ENCODE measurements at regions of chr10 and their contacts with region 1.

Region 1: GRCh38 chr10:125982260-125982948 is 86.0 kb downstream of the FANK1 start:
- DNase-seq: peak in 3 of 6 donors; percentile 24 to 51 (median 41)
- ATAC-seq: peak; percentile 53 to 93 (median 87)
- H3K4me3 ChIP-seq: no peak overlapping the region
- H3K27ac ChIP-seq: no peak overlapping the region
- H3K4me1 ChIP-seq: no peaks in the 10 kb centered on the region
- H3K27me3 ChIP-seq: no peaks in the 10 kb centered on the region
- CTCF ChIP-seq: peak; percentile 26 to 63 (median 35)

Region 2: DNA sequence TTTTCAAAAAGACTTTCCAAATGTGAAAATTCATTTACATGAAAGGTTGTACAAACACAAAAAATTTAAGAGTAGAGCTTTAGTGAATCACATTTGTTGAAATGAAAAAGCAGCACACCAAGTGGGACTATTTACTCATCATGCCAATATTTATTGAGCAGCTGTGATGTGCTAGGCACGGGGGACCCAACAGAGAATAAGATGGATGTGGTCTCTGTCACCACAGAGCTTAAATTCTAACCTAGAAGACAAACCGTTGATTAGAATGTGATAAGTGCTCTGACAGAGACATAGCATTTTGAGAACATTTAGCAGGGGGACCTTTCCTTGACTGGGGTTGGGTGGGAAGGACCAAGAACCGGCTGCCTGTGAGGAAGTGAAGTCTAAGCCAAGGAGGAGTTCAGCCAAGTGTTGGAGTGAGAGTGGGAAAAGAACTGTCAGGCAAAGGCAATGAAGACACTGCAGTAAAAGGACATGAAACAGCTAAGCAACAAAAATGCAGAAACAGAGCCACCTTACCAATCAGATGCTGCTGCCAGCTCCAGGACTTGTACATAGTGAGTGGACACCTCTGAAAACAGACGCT is 386.8 kb after region 1 on chr10:
- intact Hi-C with region 1: no loop called
- DNase-seq: no peak
- ATAC-seq: no peak
- H3K4me3 ChIP-seq: no peak overlapping the region
- H3K27ac ChIP-seq: no peak overlapping the region
- H3K4me1 ChIP-seq: no peaks in the 10 kb centered on the region
- H3K27me3 ChIP-seq: peaks cover 0 to 4% (median 0%) of the 10 kb centered on the region in 4 donors
- CTCF ChIP-seq: no peak

Region 3: GRCh38 chr10:126504063-126504739 is 521.8 kb after region 1 on chr10:
- intact Hi-C with region 1: loop called in 1 of 3 experiments (anchors 5 kb)
- DNase-seq: peak in 4 of 6 donors; percentile 16 to 71 (median 39)
- ATAC-seq: peak; percentile 72 to 97 (median 95)
- H3K4me3 ChIP-seq: no peak overlapping the region
- H3K27ac ChIP-seq: no peak overlapping the region
- H3K4me1 ChIP-seq: no peaks in the 10 kb centered on the region
- H3K27me3 ChIP-seq: no peaks in the 10 kb centered on the region
- CTCF ChIP-seq: peak; percentile 34 to 62 (median 46)

Region 4: DNA sequence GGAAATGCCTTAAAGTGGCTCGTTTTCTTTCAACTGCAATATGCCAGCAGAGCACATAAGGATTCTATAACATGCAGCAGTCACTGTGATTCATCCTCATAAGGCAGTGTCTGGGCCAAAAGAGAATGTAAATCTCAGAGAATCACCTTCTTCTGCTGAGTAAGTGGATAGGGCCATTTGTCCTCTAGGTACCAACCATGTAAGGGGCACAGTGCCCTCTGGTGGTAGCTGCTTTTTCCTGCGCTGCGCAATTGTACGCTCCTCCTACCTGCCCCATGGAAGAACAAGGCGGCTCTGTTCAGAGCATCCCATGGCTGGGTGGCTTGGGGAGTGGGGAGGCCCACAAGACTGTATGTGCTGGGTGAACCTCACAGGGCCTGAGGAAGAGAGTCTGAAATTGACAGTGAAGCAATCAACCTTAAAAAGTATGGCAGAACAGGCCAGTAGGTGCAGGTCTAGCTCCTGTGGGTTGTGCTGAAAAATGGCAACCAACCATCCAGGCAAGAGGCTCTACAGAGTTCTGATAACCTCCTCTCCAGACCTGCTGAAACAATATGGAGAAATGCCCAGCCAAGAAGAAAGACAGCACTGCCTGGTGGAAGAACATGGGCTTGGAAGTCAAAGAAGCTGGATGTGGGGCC is 766.7 kb after region 1 on chr10:
- intact Hi-C with region 1: loop called in 1 of 3 experiments (anchors 10 kb)
- DNase-seq: peak; percentile 61 to 91 (median 82)
- ATAC-seq: peak; percentile 85 to 99 (median 95)
- H3K4me3 ChIP-seq: no peak overlapping the region
- H3K27ac ChIP-seq: no peak overlapping the region
- H3K4me1 ChIP-seq: no peaks in the 10 kb centered on the region
- H3K27me3 ChIP-seq: no peaks in the 10 kb centered on the region
- CTCF ChIP-seq: peak; percentile 73 to 82 (median 76)